Aorta (tissue), 5 donors: ENCODE measurements at regions of chr2 and their contacts with region 1.

Region 1: DNA sequence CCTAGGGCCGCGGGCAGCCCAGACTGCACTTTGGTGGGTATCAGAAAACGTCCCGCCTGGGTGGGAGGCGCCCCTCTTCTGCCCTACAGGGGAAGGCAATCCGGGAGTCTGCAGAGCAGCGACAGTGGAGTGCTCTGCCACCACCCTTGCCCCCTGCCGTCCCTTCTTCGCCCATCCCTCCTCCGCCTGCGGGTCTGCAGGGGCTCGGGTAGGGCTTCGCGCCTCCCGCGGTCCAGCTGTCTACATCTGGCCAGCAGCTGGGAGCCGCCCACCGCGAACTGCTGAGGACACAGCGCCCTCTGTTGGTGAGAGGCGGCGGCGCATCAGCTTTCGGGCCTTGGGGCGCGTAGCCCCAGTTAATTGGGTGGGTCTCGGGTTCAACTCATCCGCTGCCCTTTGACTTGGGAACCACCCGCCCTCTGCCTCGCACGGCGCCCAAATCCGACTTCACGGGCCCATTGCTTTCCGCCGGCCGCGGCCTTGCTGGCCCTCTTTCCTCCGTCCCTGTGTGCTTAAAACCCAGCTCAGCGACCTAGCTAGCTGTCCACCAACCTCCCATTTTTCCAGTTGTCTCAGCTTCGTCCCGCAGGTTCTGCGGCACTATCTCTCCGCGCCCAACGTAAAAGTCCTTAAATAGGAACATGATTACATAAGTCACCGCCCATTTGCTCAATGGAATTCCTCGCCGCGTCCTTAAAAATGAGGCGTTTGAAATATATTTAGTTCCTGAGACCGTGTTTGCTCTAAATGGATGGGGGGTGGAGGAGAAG is 17.6 kb downstream of the WNT10A start:
- DNase-seq: peak; percentile 79 to 94
- ATAC-seq: peak; percentile 87
- H3K4me3 ChIP-seq: no peak overlapping the region
- H3K27ac ChIP-seq: no peak overlapping the region
- H3K4me1 ChIP-seq: no peaks in the 10 kb centered on the region
- H3K27me3 ChIP-seq: no peaks in the 10 kb centered on the region

Region 2: DNA sequence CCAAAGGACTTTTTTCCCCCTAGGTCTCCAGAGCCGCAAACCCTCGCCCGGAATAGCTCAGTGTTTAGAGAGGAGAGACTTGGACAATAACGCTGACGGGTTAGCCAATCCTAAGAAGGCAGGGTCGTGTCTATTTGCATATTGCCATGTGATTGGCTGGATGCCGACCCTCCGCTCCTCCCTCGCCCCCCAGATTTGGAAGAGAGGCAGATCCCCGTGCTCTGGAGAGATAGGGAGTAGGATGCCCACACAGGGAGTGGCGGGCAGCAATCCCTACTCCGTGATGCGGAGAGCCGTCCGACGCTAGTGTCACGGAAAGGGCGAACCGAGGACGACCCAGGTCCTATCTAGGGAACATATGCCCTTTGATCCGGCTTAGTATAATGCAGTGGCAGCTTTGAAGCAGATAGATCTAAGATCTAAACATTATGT is 37.3 kb before region 1 on chr2:
- intact Hi-C with region 1: no loop called
- DNase-seq: peak; percentile 46 to 75
- ATAC-seq: no peak
- H3K4me3 ChIP-seq: no peak overlapping the region
- H3K27ac ChIP-seq: no peak overlapping the region
- H3K4me1 ChIP-seq: no peaks in the 10 kb centered on the region
- H3K27me3 ChIP-seq: no peaks in the 10 kb centered on the region

Region 3: GRCh38 chr2:218876562-218877219 is 21.6 kb before region 1 on chr2:
- intact Hi-C with region 1: loop called (anchors 1 to 2 kb)
- DNase-seq: peak in 1 of 2 donors; percentile 82
- ATAC-seq: peak; percentile 47
- H3K4me3 ChIP-seq: no peak overlapping the region
- H3K27ac ChIP-seq: no peak overlapping the region
- H3K4me1 ChIP-seq: no peaks in the 10 kb centered on the region
- H3K27me3 ChIP-seq: no peaks in the 10 kb centered on the region

Region 4: DNA sequence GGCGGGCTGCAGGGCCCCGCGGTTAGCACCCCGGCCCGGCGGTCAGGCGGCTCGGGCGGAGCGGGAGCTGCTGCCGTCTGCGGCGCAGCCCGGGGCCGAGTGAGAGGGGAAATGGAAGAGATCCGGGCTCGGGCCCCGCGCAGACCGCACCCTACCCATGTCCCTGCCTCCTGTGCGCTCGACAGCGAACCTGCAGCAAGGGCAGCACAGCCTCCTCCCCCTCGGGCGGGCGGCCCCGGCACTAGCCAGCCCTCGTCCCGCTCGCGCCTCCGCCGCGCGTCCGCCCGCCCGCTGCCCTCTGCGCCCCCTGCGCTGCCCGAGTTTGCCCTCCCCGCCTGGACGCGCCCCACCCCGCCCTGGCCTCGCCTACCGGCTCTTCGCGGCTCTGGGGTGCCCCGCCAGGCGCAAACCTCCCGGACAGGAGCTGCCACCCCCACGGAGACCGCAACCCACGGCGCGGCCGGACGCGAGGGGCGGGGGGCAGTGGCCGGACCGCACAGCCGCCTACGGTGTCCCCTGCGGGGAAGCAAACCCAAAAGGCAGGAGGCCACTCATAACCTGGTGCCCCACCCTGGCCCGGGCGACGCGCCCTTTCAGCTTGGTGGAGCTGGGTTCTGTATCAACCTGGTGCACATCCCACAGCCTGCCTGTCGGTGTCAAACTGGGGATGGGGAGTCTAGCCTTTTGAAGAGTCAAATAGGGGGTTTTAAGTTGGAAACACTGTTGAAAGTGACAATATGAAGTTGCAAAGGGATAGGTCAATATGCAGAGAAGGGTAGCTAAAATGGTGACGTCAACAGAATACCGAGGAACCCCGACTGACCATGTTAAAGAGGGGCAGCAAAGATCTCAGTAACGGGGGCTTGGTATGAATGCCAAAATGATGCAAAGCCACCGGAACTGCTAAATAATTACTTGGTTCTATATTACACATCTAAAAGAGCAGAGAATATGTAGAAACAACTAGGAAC is 162.8 kb after region 1 on chr2 and contains the start of gene IHH:
- intact Hi-C with region 1: no loop called
- DNase-seq: no peak
- ATAC-seq: no peak
- H3K4me3 ChIP-seq: peak within 1 kb of the TSS in 1 of 2 donors; percentile 14
- H3K27ac ChIP-seq: no peak within 1 kb of the TSS
- H3K4me1 ChIP-seq: no peaks in the 10 kb centered on the region
- H3K27me3 ChIP-seq: no peaks in the 10 kb centered on the region
- total RNA-seq, gene IHH: not detected